ENCODE measurements at regions of chr3 and their contacts with region 1.

Region 1: DNA sequence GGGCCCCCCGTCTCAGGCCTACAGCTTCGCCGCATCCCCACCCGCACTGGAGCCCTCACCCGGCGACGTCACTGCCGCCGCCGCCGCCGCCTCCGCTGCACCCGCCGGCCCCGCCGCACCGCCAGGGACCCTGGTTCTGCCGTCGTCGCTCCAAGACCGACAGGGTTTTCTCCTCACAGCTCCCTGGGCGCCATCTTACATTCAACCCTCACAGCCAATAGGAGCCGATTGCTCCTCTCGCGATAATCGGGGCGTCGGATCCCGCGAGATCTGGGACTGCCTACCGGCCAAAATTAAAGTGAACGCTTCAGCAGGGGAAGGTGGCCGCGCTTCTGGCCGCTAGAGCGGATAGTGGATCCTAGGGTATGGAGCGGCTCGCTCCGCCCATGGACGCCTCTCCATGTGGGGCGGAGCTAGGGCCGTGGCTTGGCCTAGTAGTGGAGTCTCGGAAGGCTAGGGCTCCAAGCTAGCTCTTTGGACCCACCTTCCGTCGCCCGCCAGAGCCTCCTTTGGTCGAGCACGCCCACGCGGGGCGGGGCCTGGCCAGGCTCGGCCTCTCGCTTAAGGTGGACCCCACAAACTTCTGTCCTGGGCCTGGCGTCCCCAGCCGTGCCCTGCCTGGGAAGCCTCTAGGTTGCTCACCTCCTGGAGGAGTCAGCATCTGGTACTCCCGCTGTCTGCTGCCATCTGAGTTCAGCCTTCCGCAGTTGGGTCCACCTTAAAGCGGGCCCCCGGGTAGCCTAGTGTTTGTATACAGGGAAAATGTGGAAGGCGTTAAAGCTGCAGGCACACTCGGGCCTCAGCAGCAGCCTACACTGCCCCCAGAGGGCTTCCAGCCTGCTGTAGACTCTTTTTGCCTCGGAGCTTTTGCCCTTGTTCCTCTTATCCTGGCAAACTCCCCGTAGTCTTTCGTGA is at the start of gene QRICH1:
- DNase-seq: peak; percentile 94 to 97
- ATAC-seq: peak; percentile 91 to 93
- H3K4me3 ChIP-seq: peak within 1 kb of the TSS; percentile 77 to 93 (median 83)
- H3K27ac ChIP-seq: peak within 1 kb of the TSS; percentile 85 to 96 (median 90)
- H3K4me1 ChIP-seq: peaks cover 40 to 45% of the 10 kb centered on the region in 2 donors
- H3K27me3 ChIP-seq: no peaks in the 10 kb centered on the region
- CTCF ChIP-seq: peak; percentile 55 to 65 (median 59)
- POLR2A ChIP-seq: peak; percentile 60 to 61
- total RNA-seq, gene QRICH1: 35.8 to 65.6 (median 47.1) TPM

Region 2: DNA sequence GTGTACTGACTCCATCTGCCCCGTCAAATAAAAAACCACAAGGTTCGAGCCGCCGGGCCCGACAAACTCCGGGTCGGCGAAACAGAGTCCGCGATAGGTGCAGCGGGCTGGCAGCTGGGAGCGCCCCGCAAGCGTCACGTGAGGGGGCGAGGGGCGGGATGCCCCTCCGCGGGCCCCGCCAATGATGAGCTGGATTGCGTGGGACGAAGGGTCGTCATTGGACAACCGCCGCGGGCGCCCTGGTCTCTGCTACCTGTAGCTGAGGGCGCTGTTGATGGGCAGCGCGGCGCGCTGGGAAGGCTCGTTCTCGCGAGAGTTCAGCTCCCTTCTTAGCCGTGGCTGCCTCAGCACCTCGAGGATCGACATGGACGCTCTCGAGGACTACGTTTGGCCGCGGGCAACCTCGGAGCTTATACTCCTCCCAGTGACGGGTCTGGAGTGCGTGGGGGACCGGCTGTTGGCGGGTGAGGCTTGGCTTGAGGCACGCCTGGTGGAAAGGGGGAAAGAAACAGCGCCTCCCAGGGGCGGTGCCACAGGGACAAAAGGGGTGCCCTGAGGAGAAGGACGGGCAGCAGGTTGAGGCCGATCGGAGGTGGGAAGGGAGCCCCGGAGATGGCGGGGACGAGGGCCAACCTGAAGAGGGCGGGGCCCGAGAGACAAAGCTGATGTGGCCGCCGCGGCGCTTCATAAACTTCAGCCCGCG is 86.9 kb before region 1 on chr3 and contains the start of gene WDR6:
- in situ Hi-C with region 1: no loop called
- intact Hi-C with region 1: loop called (anchors 1 kb)
- DNase-seq: peak; percentile 97 to 98
- ATAC-seq: peak; percentile 91 to 94
- H3K4me3 ChIP-seq: peak within 1 kb of the TSS; percentile 85 to 99 (median 97)
- H3K27ac ChIP-seq: peak within 1 kb of the TSS; percentile 95 to 100 (median 99)
- H3K4me1 ChIP-seq: peaks cover 15 to 26% of the 10 kb centered on the region in 2 donors
- H3K27me3 ChIP-seq: no peaks in the 10 kb centered on the region
- CTCF ChIP-seq: peak; percentile 33 to 66 (median 58)
- POLR2A ChIP-seq: peak; percentile 74 to 80
- total RNA-seq, gene WDR6: 40.4 to 50.9 (median 45.5) TPM

Region 3: GRCh38 chr3:49104483-49105291 is 10.6 kb after region 1 on chr3 and contains the start of gene QARS1:
- in situ Hi-C with region 1: no loop called
- intact Hi-C with region 1: loop called (anchors 1 kb)
- DNase-seq: peak; percentile 93 to 95
- ATAC-seq: peak; percentile 98 to 99
- H3K4me3 ChIP-seq: peak within 1 kb of the TSS; percentile 82 to 94 (median 91)
- H3K27ac ChIP-seq: peak within 1 kb of the TSS; percentile 75 to 91 (median 86)
- H3K4me1 ChIP-seq: peaks cover 19 to 26% of the 10 kb centered on the region in 2 donors
- H3K27me3 ChIP-seq: no peaks in the 10 kb centered on the region
- CTCF ChIP-seq: no peak
- POLR2A ChIP-seq: peak; percentile 52 to 81
- total RNA-seq, gene QARS1: 157 to 259 (median 173) TPM

Region 4: GRCh38 chr3:49133226-49133951 is 39.3 kb after region 1 on chr3:
- in situ Hi-C with region 1: no loop called
- intact Hi-C with region 1: loop called (anchors 1 kb)
- DNase-seq: peak; percentile 76 to 83
- ATAC-seq: peak; percentile 85 to 87
- H3K4me3 ChIP-seq: peak overlapping the region; percentile 79 to 100 (median 90)
- H3K27ac ChIP-seq: peak overlapping the region; percentile 90 to 96 (median 94)
- H3K4me1 ChIP-seq: peaks cover 19 to 42% of the 10 kb centered on the region in 2 donors
- H3K27me3 ChIP-seq: no peaks in the 10 kb centered on the region
- CTCF ChIP-seq: peak in 1 of 5 experiments; percentile 20
- POLR2A ChIP-seq: no peak

Region 5: DNA sequence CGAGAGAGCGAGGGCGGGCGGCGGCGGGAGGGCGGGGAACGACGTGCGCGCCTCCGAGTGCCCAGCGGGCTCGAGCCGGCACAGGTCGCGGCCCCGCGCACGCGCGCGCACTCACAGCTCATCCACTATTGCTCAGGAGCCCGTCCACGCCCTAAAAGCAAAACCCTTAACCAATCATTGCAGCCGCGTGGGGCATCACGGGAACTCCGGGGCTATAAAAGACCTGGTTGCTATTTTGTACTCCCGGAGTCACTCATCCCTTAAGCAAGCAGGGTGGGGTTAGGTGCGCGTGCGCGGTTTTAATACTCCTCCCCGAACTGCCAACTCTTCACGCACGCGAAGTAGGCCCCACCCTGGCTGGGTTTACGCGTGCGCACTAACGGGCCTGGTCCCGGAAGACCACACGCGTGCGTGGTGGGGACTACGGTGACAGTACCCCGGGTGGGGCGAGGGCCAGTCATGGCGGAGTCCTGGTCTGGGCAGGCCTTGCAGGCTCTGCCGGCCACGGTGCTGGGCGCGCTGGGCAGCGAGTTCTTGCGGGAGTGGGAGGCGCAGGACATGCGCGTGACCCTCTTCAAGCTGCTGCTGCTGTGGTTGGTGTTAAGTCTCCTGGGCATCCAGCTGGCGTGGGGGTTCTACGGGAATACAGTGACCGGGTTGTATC is 318.0 kb after region 1 on chr3 and contains the starts of genes RHOA and TCTA:
- in situ Hi-C with region 1: no loop called
- intact Hi-C with region 1: loop called (anchors 5 kb)
- DNase-seq: peak; percentile 100
- ATAC-seq: peak; percentile 93 to 96
- H3K4me3 ChIP-seq: peak within 1 kb of the TSS; percentile 74 to 97 (median 80)
- H3K27ac ChIP-seq: peak within 1 kb of the TSS; percentile 85 to 96 (median 92)
- H3K4me1 ChIP-seq: peaks cover 48 to 55% of the 10 kb centered on the region in 2 donors
- H3K27me3 ChIP-seq: no peaks in the 10 kb centered on the region
- CTCF ChIP-seq: peak in 1 of 5 experiments; percentile 24
- POLR2A ChIP-seq: peak; percentile 98 to 99
- total RNA-seq, gene RHOA: 244 to 411 (median 282) TPM
- total RNA-seq, gene TCTA: 12.0 to 25.8 (median 15.1) TPM